ENCODE measurements at regions of chr1 and their contacts with region 1.

Region 1: GRCh38 chr1:79497193-79497773 is 490.8 kb upstream of the ADGRL4 start:
- DNase-seq: peak; percentile 79
- H3K4me3 ChIP-seq: no peak overlapping the region
- H3K27ac ChIP-seq: no peak overlapping the region
- H3K4me1 ChIP-seq: peaks cover 15% of the 10 kb centered on the region
- CTCF ChIP-seq: peak; percentile 100

Region 2: DNA sequence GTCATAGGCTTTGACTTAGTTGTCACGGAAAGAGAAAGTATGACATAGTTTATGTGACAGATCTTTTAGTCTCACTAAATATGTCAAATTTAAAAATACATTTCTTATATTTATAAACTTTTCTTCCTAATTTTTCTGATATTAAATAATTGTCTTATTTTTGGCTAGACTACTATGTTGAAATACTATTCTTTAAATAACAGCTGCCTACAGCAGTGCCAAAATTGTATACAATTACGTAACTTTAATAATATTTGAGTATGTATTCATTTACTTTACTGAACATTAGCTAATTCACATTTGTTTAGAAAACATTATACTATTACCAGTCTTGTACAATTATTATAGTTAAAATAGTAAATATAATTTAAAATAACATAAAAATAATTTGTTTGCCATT is 628.1 kb before region 1 on chr1:
- CTCF ChIA-PET with region 1: no interaction called
- POLR2A ChIA-PET with region 1: no interaction called
- intact Hi-C with region 1: no loop called
- DNase-seq: no peak
- H3K4me3 ChIP-seq: no peak overlapping the region
- H3K27ac ChIP-seq: no peak overlapping the region
- H3K4me1 ChIP-seq: no peaks in the 10 kb centered on the region
- CTCF ChIP-seq: no peak

Region 3: GRCh38 chr1:79679916-79680315 is 182.6 kb after region 1 on chr1:
- CTCF ChIA-PET with region 1: no interaction called
- POLR2A ChIA-PET with region 1: interaction called, 4 read pairs
- intact Hi-C with region 1: loop called (anchors 10 kb)
- DNase-seq: no peak
- H3K4me3 ChIP-seq: no peak overlapping the region
- H3K27ac ChIP-seq: no peak overlapping the region
- H3K4me1 ChIP-seq: no peaks in the 10 kb centered on the region
- CTCF ChIP-seq: no peak

Region 4: GRCh38 chr1:79726321-79726720 is 229.0 kb after region 1 on chr1:
- CTCF ChIA-PET with region 1: no interaction called
- POLR2A ChIA-PET with region 1: no interaction called
- intact Hi-C with region 1: no loop called
- DNase-seq: no peak
- H3K4me3 ChIP-seq: no peak overlapping the region
- H3K27ac ChIP-seq: no peak overlapping the region
- H3K4me1 ChIP-seq: no peaks in the 10 kb centered on the region
- CTCF ChIP-seq: no peak

Region 5: GRCh38 chr1:79777481-79778219 is 280.4 kb after region 1 on chr1:
- CTCF ChIA-PET with region 1: no interaction called
- POLR2A ChIA-PET with region 1: no interaction called
- intact Hi-C with region 1: loop called (anchors 10 kb)
- DNase-seq: peak; percentile 85
- H3K4me3 ChIP-seq: no peak overlapping the region
- H3K27ac ChIP-seq: peak overlapping the region; percentile 75
- H3K4me1 ChIP-seq: peaks cover 20% of the 10 kb centered on the region
- CTCF ChIP-seq: no peak

Region 6: DNA sequence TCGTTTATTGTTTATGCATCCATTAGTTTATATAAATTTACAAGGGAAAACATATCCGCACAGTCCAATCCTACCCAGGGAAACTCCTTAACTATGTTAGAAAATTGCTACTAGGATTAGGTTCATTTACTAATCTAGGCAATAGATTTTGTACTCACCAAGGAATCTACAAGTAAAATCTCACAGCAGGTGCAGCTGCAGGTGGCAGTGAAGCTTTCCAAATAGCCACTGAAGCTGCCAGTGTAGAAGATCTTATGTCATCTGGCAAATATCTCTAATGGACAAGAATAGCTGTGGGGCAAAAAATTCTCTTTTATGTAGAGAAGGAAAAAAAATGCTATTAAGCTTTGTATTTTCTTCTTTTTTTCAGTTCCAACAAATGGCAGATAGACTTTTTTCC is 472.6 kb after region 1 on chr1:
- CTCF ChIA-PET with region 1: no interaction called
- POLR2A ChIA-PET with region 1: no interaction called
- intact Hi-C with region 1: loop called (anchors 5 kb)
- DNase-seq: no peak
- H3K4me3 ChIP-seq: no peak overlapping the region
- H3K27ac ChIP-seq: no peak overlapping the region
- H3K4me1 ChIP-seq: no peaks in the 10 kb centered on the region
- CTCF ChIP-seq: no peak

Region 7: GRCh38 chr1:80217377-80217986 is 720.2 kb after region 1 on chr1:
- CTCF ChIA-PET with region 1: no interaction called
- POLR2A ChIA-PET with region 1: no interaction called
- intact Hi-C with region 1: loop called (anchors 2 kb)
- DNase-seq: peak; percentile 0
- H3K4me3 ChIP-seq: no peak overlapping the region
- H3K27ac ChIP-seq: no peak overlapping the region
- H3K4me1 ChIP-seq: no peaks in the 10 kb centered on the region
- CTCF ChIP-seq: peak; percentile 68

Measured in OCI-LY7 (cell line).